Activated CD4-positive, alpha-beta memory T cell treated with anti-CD3 and anti-CD28 coated beads for 36 hours (primary cell): ENCODE measurements at regions of chr1 and their contacts with region 1.

Region 1: DNA sequence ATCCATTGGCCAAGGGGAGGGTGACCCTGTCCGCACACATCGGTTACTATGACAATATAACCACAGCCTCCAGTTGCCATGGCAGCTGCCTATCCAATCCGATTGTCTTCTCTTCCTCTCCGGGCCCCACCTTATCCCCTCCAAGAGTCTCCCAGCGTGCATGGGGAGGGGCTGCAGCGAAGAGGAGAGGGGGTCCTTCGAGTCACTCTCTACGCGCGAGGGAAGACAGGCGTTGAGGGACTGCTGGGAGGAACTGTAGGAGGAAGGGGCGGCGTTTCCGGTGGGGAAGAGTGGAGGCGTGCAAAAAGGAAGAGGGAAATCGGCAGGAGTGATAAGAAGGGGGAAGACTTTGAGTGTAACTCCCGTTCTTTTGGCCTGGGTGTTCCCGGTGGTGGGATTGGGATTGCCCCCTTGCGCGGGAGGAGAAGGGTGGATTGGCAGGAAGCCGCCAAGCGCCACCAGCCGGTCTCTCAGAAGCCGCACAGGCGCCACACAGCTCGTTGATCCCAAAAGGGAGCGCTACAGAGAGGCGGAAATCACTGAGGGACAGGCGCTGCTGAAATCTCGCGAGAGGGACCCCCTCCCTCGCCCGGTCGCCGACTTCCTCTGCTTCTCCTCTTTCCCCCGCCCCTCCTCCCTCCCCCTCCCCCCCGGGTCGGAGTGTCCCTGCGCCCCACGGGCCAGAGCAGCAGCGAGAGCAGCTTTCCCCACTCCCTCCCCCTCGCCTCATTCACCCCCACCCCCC is 384 bp upstream of the SMG7 start:
- DNase-seq: peak; percentile 98
- H3K4me3 Mint-ChIP-seq: peak overlapping the region; percentile 85
- H3K27ac Mint-ChIP-seq: peak overlapping the region; percentile 99
- H3K4me1 Mint-ChIP-seq: peaks cover 20% of the 10 kb centered on the region
- H3K27me3 Mint-ChIP-seq: no peaks in the 10 kb centered on the region

Region 2: DNA sequence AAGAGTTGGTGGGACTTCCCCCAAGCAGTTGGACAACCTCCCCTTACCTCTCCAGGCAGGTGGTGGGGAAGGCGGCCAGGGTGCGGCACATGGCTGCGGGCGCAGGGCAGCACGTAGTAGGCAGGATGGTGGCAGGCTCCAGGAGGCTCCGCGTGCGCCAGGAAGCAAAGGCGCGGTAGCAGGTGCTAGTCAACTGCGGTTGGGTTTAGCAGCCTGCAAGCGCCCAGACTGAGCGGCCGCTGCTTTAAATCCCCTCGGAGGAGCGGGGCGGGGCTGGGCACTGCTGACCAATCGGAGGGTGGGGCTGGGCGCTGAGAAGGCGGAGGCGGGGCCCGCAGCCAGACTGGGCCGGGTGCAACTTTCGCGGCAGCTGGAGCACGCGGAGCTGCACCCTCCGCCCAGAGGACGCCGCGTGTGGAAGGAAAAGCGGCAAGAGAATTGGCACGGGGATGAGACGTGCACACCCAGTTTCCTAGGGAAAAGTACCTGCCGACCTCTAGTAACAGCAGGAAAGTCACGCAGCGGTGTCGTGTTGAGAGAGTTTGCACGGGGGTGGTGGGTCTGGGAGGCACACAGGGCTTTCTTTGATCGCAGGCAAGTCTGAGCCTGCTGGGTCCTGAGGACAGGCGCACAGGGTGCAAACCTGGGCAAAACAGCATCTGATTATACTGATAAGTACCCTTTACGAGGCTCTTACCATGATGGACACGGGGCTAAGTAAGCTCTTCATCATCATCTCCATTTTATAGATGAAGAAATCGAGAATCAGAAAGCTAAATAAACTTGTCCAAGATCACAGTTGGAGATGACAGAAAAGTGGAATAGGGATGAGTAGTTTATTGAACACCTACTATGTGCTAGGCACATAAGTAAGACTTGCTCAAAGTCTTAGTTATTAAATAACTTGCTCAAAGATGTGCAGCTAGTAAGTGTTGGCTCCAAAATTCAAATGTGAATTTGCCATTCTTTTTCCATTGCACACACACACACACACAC is 867.4 kb before region 1 on chr1 and contains the start of gene RGS16:
- CTCF ChIA-PET with region 1: no interaction called
- POLR2A ChIA-PET with region 1: no interaction called
- intact Hi-C with region 1: loop called (anchors 10 kb)
- DNase-seq: peak; percentile 96
- H3K4me3 Mint-ChIP-seq: no peak within 1 kb of the TSS
- H3K27ac Mint-ChIP-seq: no peak within 1 kb of the TSS
- H3K4me1 Mint-ChIP-seq: peaks cover 35% of the 10 kb centered on the region
- H3K27me3 Mint-ChIP-seq: no peaks in the 10 kb centered on the region
- total RNA-seq, gene RGS16: 49.8 to 51.9 TPM

Region 3: DNA sequence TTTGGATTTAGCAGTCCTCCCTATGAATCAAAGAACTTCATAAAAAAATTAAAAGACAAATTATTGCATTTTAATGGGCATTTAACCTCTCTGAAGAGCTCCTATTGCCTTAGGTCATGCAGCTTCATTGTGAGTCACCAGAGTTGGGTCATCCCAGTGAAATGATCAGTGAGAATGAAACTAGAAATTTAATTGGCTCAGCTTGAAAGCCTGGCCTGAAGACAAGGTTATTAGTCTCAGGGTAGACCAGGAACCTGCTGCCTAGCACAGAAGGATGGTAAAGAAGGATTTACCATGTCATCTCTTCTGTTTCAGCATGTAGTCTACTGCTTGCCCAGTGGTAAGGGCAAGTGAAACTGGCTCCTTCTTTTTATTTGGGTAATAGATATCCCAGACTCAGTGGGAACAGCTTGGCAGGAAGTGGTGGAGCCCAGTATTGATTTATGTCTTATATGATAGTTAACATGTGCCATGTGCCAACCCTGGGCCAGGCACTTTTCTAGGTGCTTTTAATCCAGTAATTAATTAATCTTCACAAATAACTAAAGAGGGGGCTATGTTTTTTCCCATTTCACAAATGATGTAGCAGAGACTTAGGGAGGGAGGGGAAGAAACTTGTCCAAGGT is 262.3 kb before region 1 on chr1:
- CTCF ChIA-PET with region 1: no interaction called
- POLR2A ChIA-PET with region 1: no interaction called
- intact Hi-C with region 1: no loop called
- DNase-seq: no peak
- H3K4me3 Mint-ChIP-seq: no peak overlapping the region
- H3K27ac Mint-ChIP-seq: no peak overlapping the region
- H3K4me1 Mint-ChIP-seq: no peaks in the 10 kb centered on the region
- H3K27me3 Mint-ChIP-seq: peaks cover 14% of the 10 kb centered on the region

Region 4: DNA sequence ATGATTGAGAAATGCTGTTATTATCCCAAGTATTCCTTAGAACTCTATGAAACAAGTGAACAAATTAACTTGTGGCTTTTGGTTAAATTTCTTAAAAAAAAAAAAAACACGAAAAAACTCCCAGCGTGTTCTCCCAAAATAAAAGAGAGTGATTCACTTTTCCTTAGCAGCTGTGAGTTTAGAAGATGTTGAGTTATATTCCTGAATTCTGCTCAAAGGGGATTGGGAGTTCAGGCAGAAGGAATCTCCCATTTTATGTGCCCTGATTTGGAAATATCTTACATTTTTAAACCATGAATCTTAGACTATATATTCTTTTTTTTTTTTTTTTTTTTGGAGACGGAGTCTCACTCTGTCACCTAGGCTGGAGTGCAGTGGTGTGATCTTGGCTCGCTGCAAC is 34.6 kb after region 1 on chr1:
- CTCF ChIA-PET with region 1: no interaction called
- POLR2A ChIA-PET with region 1: no interaction called
- intact Hi-C with region 1: no loop called
- DNase-seq: no peak
- H3K4me3 Mint-ChIP-seq: no peak overlapping the region
- H3K27ac Mint-ChIP-seq: no peak overlapping the region
- H3K4me1 Mint-ChIP-seq: peaks cover 27% of the 10 kb centered on the region
- H3K27me3 Mint-ChIP-seq: no peaks in the 10 kb centered on the region

Region 5: GRCh38 chr1:183590244-183591191 is 118.6 kb after region 1 on chr1 and contains the start of gene NCF2:
- CTCF ChIA-PET with region 1: no interaction called
- POLR2A ChIA-PET with region 1: no interaction called
- intact Hi-C with region 1: loop called (anchors 1 kb)
- DNase-seq: peak; percentile 71
- H3K4me3 Mint-ChIP-seq: peak within 1 kb of the TSS; percentile 64
- H3K27ac Mint-ChIP-seq: peak within 1 kb of the TSS; percentile 70
- H3K4me1 Mint-ChIP-seq: peaks cover 39% of the 10 kb centered on the region
- H3K27me3 Mint-ChIP-seq: no peaks in the 10 kb centered on the region
- total RNA-seq, gene NCF2: 6.6 to 7.7 TPM

Region 6: GRCh38 chr1:183655562-183656075 is 183.7 kb after region 1 on chr1:
- CTCF ChIA-PET with region 1: no interaction called
- POLR2A ChIA-PET with region 1: no interaction called
- intact Hi-C with region 1: loop called (anchors 1 kb)
- DNase-seq: peak; percentile 81
- H3K4me3 Mint-ChIP-seq: no peak overlapping the region
- H3K27ac Mint-ChIP-seq: no peak overlapping the region
- H3K4me1 Mint-ChIP-seq: peaks cover 33% of the 10 kb centered on the region
- H3K27me3 Mint-ChIP-seq: no peaks in the 10 kb centered on the region

Region 7: DNA sequence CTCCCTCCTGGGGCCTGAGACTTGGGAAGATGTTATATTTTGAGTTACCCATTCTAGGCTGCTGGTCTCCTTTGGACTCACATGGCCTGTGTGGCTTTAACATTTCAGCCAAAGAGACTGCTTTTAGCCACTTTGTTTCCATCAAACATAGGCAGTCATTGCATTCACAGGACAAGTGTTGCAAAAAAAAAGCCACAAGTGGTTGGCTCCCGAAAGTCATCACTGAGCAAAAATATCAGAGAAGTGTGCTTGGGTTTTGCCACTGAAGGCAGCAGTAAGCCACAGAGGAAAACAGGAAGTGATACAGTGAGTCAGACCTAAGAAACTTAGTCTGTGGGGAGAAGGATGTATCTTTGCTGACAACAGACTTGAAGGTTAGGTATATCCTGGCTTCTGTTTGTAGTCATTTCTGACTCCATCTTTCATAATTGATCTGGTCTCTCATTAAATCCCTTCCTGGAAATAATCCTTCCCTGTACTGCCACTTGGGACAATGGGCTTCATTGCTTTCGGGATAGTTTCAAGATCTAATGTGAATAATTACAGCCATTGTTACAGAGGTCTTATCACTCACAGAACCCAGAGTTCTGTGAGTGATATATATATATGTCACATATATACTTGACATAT is 484.8 kb after region 1 on chr1:
- CTCF ChIA-PET with region 1: no interaction called
- POLR2A ChIA-PET with region 1: no interaction called
- intact Hi-C with region 1: loop called (anchors 5 kb)
- DNase-seq: peak; percentile 72
- H3K4me3 Mint-ChIP-seq: no peak overlapping the region
- H3K27ac Mint-ChIP-seq: no peak overlapping the region
- H3K4me1 Mint-ChIP-seq: peaks cover 17% of the 10 kb centered on the region
- H3K27me3 Mint-ChIP-seq: no peaks in the 10 kb centered on the region

Region 8: GRCh38 chr1:184061396-184062003 is 589.6 kb after region 1 on chr1:
- CTCF ChIA-PET with region 1: no interaction called
- POLR2A ChIA-PET with region 1: no interaction called
- intact Hi-C with region 1: no loop called
- DNase-seq: no peak
- H3K4me3 Mint-ChIP-seq: no peak overlapping the region
- H3K27ac Mint-ChIP-seq: no peak overlapping the region
- H3K4me1 Mint-ChIP-seq: peaks cover 20% of the 10 kb centered on the region
- H3K27me3 Mint-ChIP-seq: no peaks in the 10 kb centered on the region

Region 9: GRCh38 chr1:184163674-184164465 is 692.0 kb after region 1 on chr1:
- CTCF ChIA-PET with region 1: no interaction called
- POLR2A ChIA-PET with region 1: no interaction called
- intact Hi-C with region 1: loop called (anchors 1 kb)
- DNase-seq: peak; percentile 31
- H3K4me3 Mint-ChIP-seq: no peak overlapping the region
- H3K27ac Mint-ChIP-seq: no peak overlapping the region
- H3K4me1 Mint-ChIP-seq: peaks cover 14% of the 10 kb centered on the region
- H3K27me3 Mint-ChIP-seq: peaks cover 1% of the 10 kb centered on the region

Region 10: GRCh38 chr1:184973272-184974055 is 1501.5 kb after region 1 on chr1:
- CTCF ChIA-PET with region 1: no interaction called
- POLR2A ChIA-PET with region 1: no interaction called
- intact Hi-C with region 1: loop called (anchors 10 kb)
- DNase-seq: peak; percentile 86
- H3K4me3 Mint-ChIP-seq: peak overlapping the region; percentile 94
- H3K27ac Mint-ChIP-seq: peak overlapping the region; percentile 96
- H3K4me1 Mint-ChIP-seq: peaks cover 53% of the 10 kb centered on the region
- H3K27me3 Mint-ChIP-seq: peaks cover 6% of the 10 kb centered on the region